Activated CD4-positive, alpha-beta memory T cell treated with anti-CD3 and anti-CD28 coated beads for 36 hours (primary cell): ENCODE measurements at regions of chr14 and their contacts with region 1.

Region 1: GRCh38 chr14:44912041-44912869 is 49.5 kb downstream of the KLHL28 start:
- DNase-seq: no peak
- H3K4me3 Mint-ChIP-seq: no peak overlapping the region
- H3K27ac Mint-ChIP-seq: no peak overlapping the region
- H3K4me1 Mint-ChIP-seq: peaks cover 6% of the 10 kb centered on the region
- H3K27me3 Mint-ChIP-seq: peaks cover 23% of the 10 kb centered on the region

Region 2: DNA sequence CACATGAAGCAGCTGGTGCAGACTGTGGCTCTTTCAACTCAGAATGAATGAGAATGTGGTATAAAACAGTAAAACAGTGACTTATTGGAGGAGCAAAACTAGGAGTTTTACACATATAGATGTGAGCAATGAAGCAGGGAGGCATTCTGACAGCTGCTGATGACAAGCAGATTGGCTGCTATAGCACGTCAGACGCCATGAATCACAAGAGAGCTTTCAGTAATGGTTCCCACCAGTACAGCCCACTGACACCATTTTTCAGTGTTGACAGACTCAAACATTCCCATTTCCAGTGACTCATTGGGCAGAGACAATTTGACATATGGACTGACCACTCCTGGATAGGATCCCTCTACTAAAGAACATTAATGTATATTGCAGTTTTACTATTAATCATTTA is 380.6 kb before region 1 on chr14:
- CTCF ChIA-PET with region 1: no interaction called
- POLR2A ChIA-PET with region 1: no interaction called
- intact Hi-C with region 1: no loop called
- DNase-seq: no peak
- H3K4me3 Mint-ChIP-seq: no peak overlapping the region
- H3K27ac Mint-ChIP-seq: no peak overlapping the region
- H3K4me1 Mint-ChIP-seq: no peaks in the 10 kb centered on the region
- H3K27me3 Mint-ChIP-seq: no peaks in the 10 kb centered on the region

Region 3: DNA sequence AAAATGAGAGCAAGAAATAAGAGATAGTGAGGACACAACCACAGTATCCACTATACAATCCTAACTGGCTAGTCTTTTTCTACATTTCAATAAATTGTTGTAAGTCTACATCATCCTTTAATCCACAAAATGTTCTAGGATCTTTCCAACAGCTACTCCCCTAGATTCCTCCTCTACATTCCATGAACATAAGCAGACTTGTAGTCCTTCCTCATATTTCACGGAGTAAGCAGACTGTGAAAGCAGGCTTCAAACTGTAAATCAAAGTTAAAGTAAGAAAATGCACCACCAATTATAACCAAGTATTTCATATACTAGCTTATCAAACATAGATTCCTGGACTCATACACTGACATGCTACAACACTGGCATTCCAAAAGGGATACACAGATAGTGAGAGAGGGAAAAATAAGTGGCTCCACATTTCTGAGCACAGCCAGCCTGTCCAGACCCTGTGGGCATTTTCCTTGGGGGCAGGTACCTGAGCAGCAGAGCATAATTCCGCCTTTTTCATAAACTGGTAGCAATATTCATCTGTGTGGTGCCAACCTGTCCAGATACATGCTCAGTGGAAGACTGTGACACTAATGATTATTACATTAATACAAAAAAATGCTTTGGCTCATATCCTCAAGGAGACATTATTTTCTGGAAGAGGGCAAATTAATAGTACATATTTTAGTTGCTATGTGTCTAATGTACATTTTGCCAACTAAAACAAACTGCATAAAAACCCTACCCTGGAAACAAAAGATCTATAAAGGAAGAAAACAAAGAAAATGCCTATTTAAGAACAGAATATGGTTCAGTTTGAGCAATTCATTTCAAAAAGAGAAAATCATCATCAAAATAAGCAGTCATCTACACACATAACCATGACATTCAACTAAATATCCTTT is 291.9 kb before region 1 on chr14:
- CTCF ChIA-PET with region 1: no interaction called
- POLR2A ChIA-PET with region 1: no interaction called
- intact Hi-C with region 1: no loop called
- DNase-seq: no peak
- H3K4me3 Mint-ChIP-seq: no peak overlapping the region
- H3K27ac Mint-ChIP-seq: no peak overlapping the region
- H3K4me1 Mint-ChIP-seq: no peaks in the 10 kb centered on the region
- H3K27me3 Mint-ChIP-seq: peaks cover 2% of the 10 kb centered on the region

Region 4: DNA sequence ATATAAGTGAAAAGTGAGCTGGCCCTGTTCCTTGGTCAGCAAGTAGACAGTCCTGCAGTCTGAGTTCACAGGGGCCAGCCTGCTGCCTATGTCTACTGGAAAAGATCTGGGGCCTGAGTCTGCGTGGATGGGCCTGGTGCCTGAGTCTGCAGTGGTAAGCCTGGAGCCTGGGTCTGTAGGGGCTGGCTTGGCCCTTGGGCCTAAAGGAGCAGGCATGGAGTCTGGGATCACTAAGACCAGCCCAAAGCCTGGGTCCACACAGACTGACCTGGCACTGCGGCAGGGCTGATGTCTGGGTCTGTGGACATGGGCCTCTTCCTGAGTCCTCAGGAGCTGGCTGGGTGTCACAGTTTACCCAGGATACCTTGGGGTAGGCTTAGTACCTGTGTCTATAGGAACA is 45.9 kb before region 1 on chr14:
- CTCF ChIA-PET with region 1: no interaction called
- POLR2A ChIA-PET with region 1: no interaction called
- intact Hi-C with region 1: no loop called
- DNase-seq: no peak
- H3K4me3 Mint-ChIP-seq: no peak overlapping the region
- H3K27ac Mint-ChIP-seq: no peak overlapping the region
- H3K4me1 Mint-ChIP-seq: no peaks in the 10 kb centered on the region
- H3K27me3 Mint-ChIP-seq: peaks cover 1% of the 10 kb centered on the region

Region 5: DNA sequence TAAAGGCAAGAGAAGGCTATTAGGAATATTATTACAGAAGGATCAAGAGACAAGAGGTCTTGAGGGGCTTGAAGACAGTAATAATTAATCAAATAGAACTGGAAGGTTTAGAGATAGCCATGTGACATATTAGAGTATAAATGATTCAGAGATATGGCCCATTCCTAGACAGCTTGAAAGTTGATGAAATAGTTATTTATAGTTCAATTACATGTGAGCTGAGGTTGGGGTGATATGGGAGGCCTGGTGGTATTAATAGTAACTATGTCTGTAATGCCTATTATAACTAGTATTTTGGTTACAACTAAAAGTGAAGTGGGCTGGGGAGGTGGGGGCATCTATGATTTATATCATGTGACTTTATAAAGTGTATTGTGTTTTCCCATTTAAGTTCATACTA is 354.8 kb after region 1 on chr14:
- CTCF ChIA-PET with region 1: interaction called, 21 read pairs
- POLR2A ChIA-PET with region 1: no interaction called
- intact Hi-C with region 1: loop called (anchors 1 kb)
- DNase-seq: no peak
- H3K4me3 Mint-ChIP-seq: no peak overlapping the region
- H3K27ac Mint-ChIP-seq: no peak overlapping the region
- H3K4me1 Mint-ChIP-seq: no peaks in the 10 kb centered on the region
- H3K27me3 Mint-ChIP-seq: peaks cover 6% of the 10 kb centered on the region

Region 6: GRCh38 chr14:45287610-45288009 is 375.4 kb after region 1 on chr14:
- CTCF ChIA-PET with region 1: no interaction called
- POLR2A ChIA-PET with region 1: no interaction called
- intact Hi-C with region 1: no loop called
- DNase-seq: no peak
- H3K4me3 Mint-ChIP-seq: no peak overlapping the region
- H3K27ac Mint-ChIP-seq: no peak overlapping the region
- H3K4me1 Mint-ChIP-seq: peaks cover 2% of the 10 kb centered on the region
- H3K27me3 Mint-ChIP-seq: peaks cover 2% of the 10 kb centered on the region